SK-N-SH (cell line): ENCODE measurements at regions of chr17 and their contacts with region 1.

Region 1: DNA sequence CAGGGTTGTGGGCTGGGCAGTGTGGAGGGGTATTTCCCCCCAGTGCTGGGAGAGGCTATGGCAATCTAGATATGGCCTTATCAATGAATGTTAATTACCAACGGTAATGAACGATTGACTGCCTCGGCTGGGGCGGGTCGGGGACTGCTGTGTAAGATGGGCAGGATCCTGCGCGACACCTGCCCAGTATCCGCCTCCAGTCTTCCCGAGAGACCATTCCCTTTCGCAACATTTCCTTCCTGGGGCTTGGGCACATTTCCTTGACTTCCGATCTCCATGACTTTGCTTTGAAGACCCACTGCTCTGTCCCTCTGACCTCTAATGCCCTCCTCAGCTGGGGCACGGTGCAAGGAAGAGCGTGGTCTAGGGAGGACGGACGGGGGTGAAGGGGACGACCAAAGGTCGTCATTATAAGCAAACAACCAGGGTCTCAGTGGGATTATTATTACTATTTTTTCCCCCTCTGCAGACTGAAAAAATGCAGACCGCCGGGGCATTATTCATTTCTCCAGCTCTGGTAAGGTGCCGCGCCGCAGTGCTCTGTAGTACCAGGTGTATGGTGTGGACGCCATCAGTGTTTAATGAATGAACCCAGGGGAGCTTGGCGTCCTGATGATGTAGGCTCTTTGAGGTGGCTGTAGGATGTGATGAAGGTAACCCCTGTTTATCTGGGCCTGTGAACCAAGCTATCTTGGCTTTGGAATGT is 506 bp downstream of the ATP5MC1 start:
- DNase-seq: no peak
- H3K4me3 ChIP-seq: peak overlapping the region; percentile 54 to 77
- H3K27ac ChIP-seq: peak overlapping the region; percentile 0 to 3; a peak in 2 of 4 replicates
- H3K4me1 ChIP-seq: peaks cover 10 to 11% of the 10 kb centered on the region in 2 experiments; a peak in 3 of 4 replicates
- H3K27me3 ChIP-seq: no peaks in the 10 kb centered on the region
- CTCF ChIP-seq: no peak
- EP300 ChIP-seq: no peak
- RAD21 ChIP-seq: no peak

Region 2: GRCh38 chr17:48908047-48908843 is 15.2 kb after region 1 on chr17 and contains the start of gene UBE2Z:
- CTCF ChIA-PET with region 1: interaction called, 9 read pairs
- POLR2A ChIA-PET with region 1: interaction called, 36 read pairs
- DNase-seq: peak; percentile 100
- H3K4me3 ChIP-seq: peak within 1 kb of the TSS; percentile 63 to 87
- H3K27ac ChIP-seq: peak within 1 kb of the TSS; percentile 86 to 94
- H3K4me1 ChIP-seq: peaks cover 17 to 24% of the 10 kb centered on the region in 2 experiments
- H3K27me3 ChIP-seq: no peaks in the 10 kb centered on the region
- CTCF ChIP-seq: no peak
- EP300 ChIP-seq: no peak; a peak in 1 of 4 replicates
- RAD21 ChIP-seq: no peak
- polyA plus RNA-seq, gene UBE2Z: 168 and 207 TPM in 2 replicates

Region 3: DNA sequence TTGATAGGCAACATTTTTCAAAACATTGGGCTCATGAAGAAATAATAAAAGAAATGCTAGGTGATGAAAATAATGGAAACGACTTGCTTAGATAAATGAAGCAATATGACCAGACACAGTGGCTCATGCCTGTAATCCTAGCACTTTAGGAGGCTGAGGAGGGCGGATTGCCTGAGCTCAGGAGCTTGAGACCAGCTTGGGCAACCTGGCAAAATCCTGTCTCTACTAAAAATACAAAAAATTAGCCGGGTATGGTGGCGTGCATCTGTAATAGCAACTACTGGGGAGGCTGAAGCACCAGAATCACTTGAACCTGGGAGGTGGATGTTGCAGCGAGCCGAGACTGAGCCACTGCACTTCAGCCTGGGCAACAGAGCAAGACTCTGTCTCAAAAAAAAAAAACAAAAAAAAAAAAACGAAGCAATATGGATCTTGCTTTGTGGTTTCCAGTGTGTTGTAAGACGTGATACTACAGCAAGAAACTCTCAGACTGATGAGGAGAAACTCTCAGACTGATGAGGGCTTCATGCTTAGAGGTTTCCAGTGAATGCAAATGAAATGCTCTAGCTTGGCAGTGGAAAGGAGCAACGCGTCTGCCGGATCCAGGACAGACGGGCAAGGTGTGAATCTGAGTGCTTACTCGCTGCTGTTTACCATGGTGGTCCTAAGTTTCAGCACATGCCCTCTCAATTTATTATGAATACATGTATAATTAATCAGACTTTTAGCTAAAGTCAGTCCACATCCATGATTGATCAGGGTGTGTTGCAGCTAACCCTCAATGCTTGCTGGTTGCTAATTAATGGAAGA is 92.5 kb after region 1 on chr17:
- CTCF ChIA-PET with region 1: no interaction called
- POLR2A ChIA-PET with region 1: no interaction called
- DNase-seq: no peak
- H3K4me3 ChIP-seq: no peak overlapping the region
- H3K27ac ChIP-seq: no peak overlapping the region
- H3K4me1 ChIP-seq: no peaks in the 10 kb centered on the region
- H3K27me3 ChIP-seq: peaks cover 97% of the 10 kb centered on the region
- CTCF ChIP-seq: no peak
- EP300 ChIP-seq: no peak
- RAD21 ChIP-seq: no peak